ENCODE measurements at regions of chr11 and their contacts with region 1.

Region 1: GRCh38 chr11:102293873-102294601 is 23.2 kb upstream of the BIRC3 start:
- H3K4me3 ChIP-seq: no peak overlapping the region
- H3K27ac ChIP-seq: no peak overlapping the region
- H3K4me1 ChIP-seq: no peaks in the 10 kb centered on the region
- CTCF ChIP-seq: no peak

Region 2: DNA sequence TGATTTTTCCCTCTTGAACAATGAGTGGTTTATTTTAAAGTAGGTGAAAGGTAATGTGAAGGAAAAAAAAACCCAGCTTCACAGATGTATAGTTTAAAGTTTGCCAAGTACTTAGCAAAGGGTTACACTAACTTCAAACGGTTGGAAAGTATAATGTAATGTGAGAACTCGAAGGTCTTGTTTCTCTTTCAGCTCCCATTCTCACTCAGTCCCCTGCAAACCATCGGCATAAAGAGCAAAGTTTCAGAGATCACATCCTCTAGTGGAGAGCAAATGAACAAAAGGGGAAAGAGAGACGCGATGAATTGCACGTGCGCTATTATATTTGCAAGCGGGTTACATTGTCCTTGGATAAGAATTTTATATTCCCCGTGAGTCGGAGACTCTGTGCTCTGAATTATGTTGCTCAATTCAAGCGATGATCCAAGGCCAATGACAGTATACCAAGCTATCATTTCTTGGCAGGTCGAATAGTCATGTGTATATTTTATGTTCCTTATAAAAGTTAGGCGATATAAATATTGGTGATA is 14.3 kb before region 1 on chr11:
- CTCF ChIA-PET with region 1: interaction called, 19 read pairs
- POLR2A ChIA-PET with region 1: no interaction called
- H3K4me3 ChIP-seq: no peak overlapping the region
- H3K27ac ChIP-seq: no peak overlapping the region
- H3K4me1 ChIP-seq: no peaks in the 10 kb centered on the region; the same call in 1 of the 2 replicates
- CTCF ChIP-seq: no peak

Region 3: DNA sequence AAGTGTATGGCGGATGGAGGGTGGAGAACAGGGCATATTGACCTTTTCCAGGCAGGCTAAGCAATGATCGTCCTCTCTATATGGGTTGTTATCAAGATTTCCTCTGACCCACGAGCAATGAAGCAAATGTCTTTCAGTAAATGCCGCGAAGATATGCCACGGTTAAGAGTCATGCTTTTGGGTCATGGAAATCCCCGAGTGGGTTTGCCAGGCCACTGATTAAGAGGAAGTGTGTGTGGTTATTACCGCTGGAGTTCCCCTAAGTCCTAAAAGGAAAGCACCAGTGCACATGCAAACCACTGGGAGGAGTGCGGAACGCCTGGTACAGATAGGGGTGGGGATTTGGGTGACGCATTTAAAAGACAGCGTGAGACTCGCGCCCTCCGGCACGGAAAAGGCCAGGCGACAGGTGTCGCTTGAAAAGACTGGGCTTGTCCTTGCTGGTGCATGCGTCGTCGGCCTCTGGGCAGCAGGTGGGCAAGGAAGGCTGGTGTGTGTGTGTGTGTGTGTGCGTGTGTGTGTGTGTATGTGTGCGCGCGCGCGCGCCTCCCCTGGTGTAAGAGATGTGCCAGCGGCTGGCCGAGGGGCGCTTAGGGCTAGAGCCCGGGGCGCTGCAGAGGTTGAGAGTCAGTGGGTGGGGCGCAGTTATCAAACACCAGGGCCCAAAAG is 23.2 kb after region 1 on chr11 and contains the start of gene BIRC3:
- CTCF ChIA-PET with region 1: interaction called, 12 read pairs
- POLR2A ChIA-PET with region 1: no interaction called
- H3K4me3 ChIP-seq: peak within 1 kb of the TSS; percentile 48
- H3K27ac ChIP-seq: no peak within 1 kb of the TSS
- H3K4me1 ChIP-seq: no peaks in the 10 kb centered on the region
- CTCF ChIP-seq: peak; percentile 98

Region 4: DNA sequence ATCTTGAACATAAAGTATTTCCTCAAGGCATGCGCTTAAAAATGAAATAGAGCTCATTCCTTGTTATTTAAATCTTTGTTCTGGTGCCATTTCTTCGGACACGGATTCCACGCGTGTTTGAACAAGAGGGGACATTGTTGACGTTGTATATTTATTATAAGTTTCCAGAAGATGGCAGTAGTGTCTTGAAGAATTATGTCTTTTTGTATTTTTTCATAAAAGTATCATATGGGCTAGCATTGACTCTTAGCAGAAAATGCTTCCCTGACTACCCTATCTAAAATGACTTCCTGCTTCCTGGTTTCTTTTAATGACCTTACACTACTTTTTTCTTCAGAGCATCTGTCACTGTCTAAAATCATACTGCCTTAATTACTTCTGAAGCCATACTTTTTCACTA is 73.3 kb after region 1 on chr11:
- CTCF ChIA-PET with region 1: no interaction called
- POLR2A ChIA-PET with region 1: no interaction called
- H3K4me3 ChIP-seq: no peak overlapping the region
- H3K27ac ChIP-seq: no peak overlapping the region
- H3K4me1 ChIP-seq: no peaks in the 10 kb centered on the region
- CTCF ChIP-seq: no peak

Region 5: DNA sequence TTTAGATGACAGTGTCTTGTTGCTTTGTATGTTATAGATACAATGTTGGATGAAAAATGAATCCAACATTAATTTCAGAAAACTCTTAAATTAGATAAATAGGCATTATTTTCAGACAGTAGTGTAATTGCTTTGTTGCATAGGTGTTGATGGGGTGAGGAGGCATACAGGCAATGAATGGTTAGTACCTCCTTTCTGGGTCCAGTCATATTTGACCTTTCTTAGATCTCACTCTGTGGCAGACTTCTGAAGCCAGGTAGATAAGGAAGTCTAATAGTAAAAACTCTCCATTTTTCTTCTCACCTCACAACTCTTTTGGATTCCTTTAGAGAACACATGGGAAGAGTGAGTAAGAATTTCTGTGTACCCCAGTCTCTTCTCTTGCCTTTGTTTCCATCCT is 84.8 kb after region 1 on chr11:
- CTCF ChIA-PET with region 1: no interaction called
- POLR2A ChIA-PET with region 1: no interaction called
- H3K4me3 ChIP-seq: no peak overlapping the region
- H3K27ac ChIP-seq: no peak overlapping the region
- H3K4me1 ChIP-seq: no peaks in the 10 kb centered on the region
- CTCF ChIP-seq: no peak

Region 6: GRCh38 chr11:102495161-102496042 is 201.4 kb after region 1 on chr11:
- CTCF ChIA-PET with region 1: interaction called, 12 read pairs
- POLR2A ChIA-PET with region 1: no interaction called
- H3K4me3 ChIP-seq: no peak overlapping the region
- H3K27ac ChIP-seq: no peak overlapping the region
- H3K4me1 ChIP-seq: no peaks in the 10 kb centered on the region
- CTCF ChIP-seq: no peak

Region 7: DNA sequence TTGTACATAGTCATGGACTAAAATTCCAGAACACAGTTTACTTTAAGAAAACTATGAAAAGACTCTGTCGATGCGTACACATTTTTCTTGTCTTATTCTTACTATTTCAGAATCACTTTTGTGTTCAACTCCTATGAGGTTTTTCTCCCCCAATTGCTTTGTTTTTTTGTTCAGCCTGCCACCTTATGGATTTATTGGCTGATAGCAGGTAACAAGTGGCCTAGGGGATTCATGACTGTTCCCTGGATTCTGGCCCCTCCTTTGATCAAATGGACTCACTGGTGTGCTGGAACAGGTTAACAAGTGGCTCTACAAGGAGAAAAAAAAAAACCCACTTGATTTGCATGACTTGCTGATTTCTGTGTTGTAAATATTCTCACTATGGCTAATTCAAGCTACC is 320.4 kb after region 1 on chr11:
- CTCF ChIA-PET with region 1: interaction called, 20 read pairs
- POLR2A ChIA-PET with region 1: no interaction called
- H3K4me3 ChIP-seq: no peak overlapping the region
- H3K27ac ChIP-seq: no peak overlapping the region
- H3K4me1 ChIP-seq: no peaks in the 10 kb centered on the region; the same call in 1 of the 2 replicates
- CTCF ChIP-seq: no peak